ENCODE measurements at regions of chr5 and their contacts with region 1.

Region 1: DNA sequence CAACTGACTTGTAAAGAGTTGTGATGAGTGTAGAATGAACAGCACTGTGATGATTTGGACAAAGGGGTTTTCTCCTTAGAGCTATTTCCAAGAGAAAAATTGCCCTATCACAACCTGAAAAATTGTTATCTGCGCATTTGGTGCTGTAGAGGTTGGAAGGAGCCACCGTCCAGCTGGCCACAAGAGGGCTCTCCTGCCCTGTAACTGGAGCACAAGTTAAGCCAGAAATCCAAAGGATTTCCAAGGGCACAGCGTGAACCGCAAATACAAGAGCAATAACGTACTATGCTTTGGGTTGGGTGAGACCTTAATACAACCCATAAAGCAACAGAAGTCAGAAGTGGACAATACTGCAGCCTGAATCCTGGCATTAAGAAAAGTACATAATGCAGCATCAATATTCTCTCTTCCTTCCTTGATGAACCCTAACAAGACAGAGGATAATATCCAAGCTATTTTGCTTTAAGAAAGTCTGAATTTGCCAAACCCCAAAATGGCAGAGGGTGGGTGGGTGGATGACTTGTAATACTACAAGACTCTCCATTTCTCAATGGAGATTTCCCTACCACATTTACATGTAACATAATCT is 56.8 kb upstream of the SMIM32 start:
- DNase-seq: peak in 2 of 3 donors; percentile 61 to 76
- ATAC-seq: peak; percentile 64
- H3K4me3 ChIP-seq: no peak overlapping the region
- H3K4me1 ChIP-seq: no peaks in the 10 kb centered on the region
- CTCF ChIP-seq: peak; percentile 38

Region 2: GRCh38 chr5:136424835-136425584 is 175.2 kb after region 1 on chr5:
- intact Hi-C with region 1: loop called (anchors 5 to 10 kb)
- DNase-seq: peak; percentile 55 to 90 (median 82)
- ATAC-seq: peak; percentile 82
- H3K4me3 ChIP-seq: no peak overlapping the region
- H3K4me1 ChIP-seq: no peaks in the 10 kb centered on the region
- CTCF ChIP-seq: peak; percentile 29

Region 3: DNA sequence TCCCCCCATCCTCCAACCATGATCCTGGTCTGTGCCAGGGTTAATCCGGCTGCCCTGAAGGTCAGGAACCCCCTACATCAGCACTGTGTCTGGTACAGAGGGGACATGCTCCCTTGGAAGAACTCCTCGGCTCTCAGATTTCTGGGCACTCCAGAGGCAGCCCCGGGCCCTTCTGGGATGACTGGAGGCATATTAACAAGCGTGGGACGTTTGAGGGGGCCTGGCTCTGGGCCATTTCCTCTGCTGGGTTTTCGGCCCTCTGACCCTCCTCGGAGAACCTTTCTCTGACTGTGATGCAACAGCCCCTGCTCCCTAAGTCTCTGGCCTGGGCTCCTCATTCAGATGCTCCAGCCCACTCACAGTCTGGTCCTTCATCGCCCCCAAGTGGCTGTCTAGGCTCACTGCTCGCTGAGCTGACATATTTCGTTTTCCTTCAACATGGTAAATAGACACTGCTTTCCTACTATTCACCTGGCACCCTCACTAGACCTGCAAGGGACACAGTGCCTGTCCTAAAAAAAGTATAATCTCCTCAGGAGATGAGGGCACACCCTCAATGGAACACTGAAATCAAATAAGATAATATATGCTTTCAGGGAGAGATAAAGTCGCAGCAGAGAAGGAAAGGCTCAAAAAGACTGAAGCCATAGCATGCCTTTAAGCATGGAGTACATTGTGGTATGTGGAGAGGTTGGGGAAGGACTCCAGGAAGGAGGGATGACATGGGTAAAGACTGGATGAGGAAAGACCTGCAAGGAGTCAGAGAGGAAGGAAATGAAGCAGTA is 520.3 kb after region 1 on chr5:
- intact Hi-C with region 1: loop called in 1 of 2 experiments (anchors 5 kb)
- DNase-seq: peak; percentile 41 to 55 (median 54)
- ATAC-seq: peak; percentile 74
- H3K4me3 ChIP-seq: no peak overlapping the region
- H3K4me1 ChIP-seq: no peaks in the 10 kb centered on the region
- CTCF ChIP-seq: peak; percentile 43